ENCODE measurements at regions of chr5 and their contacts with region 1.

Region 1: DNA sequence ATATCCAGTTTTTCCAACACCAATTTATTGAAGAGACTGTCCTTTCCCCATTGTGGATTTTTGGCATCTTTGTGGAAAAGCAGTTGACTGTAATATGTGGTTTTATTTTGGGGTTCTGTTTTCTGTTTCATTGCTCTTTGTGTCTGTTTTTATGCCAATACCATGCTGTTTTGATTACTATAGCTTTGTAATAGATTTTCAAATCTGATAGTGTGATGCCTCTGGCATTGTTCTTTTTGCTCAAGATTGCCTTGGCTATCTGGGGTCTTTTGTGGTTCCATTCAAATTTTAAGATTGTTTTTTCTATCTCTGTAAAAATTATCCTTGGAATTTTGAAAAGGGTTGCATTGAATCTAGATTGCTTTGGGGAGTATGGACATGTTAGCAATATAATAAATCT is 99.5 kb downstream of the NDUFAF2 start:
- DNase-seq: no peak

Region 2: DNA sequence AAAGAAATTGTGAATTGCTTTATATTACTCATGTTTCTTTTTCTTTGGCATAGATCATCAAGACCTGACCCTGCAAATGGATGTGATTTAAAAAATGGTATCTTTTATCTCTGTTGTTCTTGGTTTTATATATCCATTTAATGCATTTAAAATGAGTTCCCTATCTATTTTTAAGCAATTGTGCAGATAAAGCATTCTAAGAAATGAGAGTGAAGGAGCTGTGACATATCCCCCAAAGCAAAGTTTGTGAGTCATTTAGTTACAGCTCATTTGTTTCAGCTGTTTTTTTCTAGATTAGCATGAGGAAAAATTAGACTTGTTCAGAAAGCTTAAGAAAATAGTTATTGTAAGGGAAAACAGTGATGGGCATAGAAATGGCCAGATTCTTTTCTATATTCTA is 192.9 kb before region 1 on chr5:
- intact Hi-C with region 1: loop called (anchors 5 kb)
- DNase-seq: no peak